Activated B cell treated with CpG ODN at 0.5 μM for 24 hours (primary cell): ENCODE measurements at regions of chr6 and their contacts with region 1.

Region 1: DNA sequence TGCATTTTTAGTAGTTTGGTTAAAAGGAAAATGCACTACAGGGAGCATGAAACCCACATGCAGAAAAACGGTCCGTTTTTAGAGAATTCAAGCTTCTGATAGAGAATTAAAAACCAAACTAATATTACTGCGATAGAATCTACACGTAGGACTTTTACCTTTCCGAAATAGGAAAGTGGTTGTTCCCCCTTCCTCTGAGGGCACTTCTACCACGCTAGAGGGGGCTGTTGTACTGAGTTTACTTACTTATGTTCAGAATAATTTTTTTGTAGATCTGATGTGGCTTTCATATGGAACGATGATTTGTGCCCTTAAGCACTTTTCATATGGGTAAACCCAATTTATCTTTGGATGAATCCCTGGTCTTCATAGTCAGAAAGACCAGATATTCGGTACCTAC is 264.3 kb upstream of the PLN start:
- DNase-seq: no peak
- ATAC-seq: no peak
- H3K4me3 Mint-ChIP-seq: no peak overlapping the region
- H3K27ac Mint-ChIP-seq: no peak overlapping the region
- H3K4me1 Mint-ChIP-seq: no peaks in the 10 kb centered on the region
- H3K27me3 Mint-ChIP-seq: peaks cover 17% of the 10 kb centered on the region
- CTCF ChIP-seq: no peak

Region 2: DNA sequence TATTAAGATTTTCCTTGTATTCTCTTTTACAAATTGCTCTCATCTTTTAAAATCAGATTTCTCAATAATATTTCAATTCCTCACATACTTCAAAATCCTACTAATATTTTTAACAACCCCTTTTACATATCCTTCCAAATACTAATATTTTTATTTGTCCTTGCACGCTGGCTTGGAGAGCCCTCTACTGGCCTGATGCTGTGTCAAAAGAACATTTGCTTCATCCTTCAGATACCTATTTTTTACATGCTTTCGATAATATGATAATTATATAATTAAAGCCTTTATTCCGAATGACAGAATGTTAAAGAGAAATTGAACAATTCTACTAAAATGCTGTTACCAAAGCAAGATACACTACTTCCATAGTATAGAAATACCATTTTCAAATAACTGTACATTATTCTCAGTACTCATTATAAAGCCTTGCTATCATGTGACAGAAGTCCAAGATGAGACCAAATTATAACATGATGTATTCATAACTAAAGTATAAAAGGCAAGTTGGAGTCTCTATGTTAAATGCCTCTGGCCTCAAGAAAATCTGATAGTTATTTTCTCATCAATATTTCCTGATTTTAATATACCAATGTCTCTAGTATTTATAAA is 225.3 kb after region 1 on chr6:
- CTCF ChIA-PET with region 1: no interaction called
- POLR2A ChIA-PET with region 1: no interaction called
- intact Hi-C with region 1: loop called (anchors 5 kb)
- DNase-seq: no peak
- ATAC-seq: no peak
- H3K4me3 Mint-ChIP-seq: no peak overlapping the region
- H3K27ac Mint-ChIP-seq: no peak overlapping the region
- H3K4me1 Mint-ChIP-seq: no peaks in the 10 kb centered on the region
- H3K27me3 Mint-ChIP-seq: no peaks in the 10 kb centered on the region
- CTCF ChIP-seq: no peak

Region 3: GRCh38 chr6:118551063-118552053 is 267.6 kb after region 1 on chr6:
- CTCF ChIA-PET with region 1: no interaction called
- POLR2A ChIA-PET with region 1: no interaction called
- intact Hi-C with region 1: loop called (anchors 1 kb)
- DNase-seq: no peak
- ATAC-seq: peak; percentile 57
- H3K4me3 Mint-ChIP-seq: no peak overlapping the region
- H3K27ac Mint-ChIP-seq: no peak overlapping the region
- H3K4me1 Mint-ChIP-seq: no peaks in the 10 kb centered on the region
- H3K27me3 Mint-ChIP-seq: no peaks in the 10 kb centered on the region
- CTCF ChIP-seq: no peak

Region 4: DNA sequence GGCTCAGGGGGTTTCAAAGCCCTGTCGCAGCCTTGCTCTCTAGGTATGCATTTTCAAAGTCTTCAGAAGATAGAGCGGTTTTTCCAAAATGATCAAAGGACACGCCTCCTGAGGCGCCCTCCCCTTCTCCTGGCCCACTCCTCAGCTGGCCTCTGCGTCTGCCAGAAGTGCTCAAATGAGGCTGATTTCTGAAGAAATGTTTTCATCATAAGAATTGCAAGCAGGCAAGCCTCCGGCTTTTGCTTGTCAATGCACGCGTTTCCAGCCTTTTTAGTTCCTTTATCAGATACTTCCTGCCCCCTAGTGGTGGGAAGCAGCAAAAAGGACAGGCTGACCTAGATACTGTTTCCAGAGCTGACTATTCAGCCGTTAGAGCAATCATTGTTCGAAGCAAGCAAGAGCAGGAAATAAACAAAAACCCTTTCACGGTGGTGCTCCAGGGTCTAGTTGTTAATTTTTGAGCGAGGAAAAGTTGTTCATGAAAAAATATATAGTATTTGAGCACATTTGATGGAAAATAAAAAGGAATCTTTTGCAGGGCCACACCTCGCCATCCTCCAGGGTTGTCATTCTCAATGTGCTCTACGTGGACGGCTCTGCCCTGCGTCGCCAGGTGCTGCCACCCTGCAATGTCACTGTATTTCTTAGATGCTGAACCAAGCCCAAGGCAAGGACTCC is 516.8 kb after region 1 on chr6:
- CTCF ChIA-PET with region 1: no interaction called
- POLR2A ChIA-PET with region 1: no interaction called
- intact Hi-C with region 1: loop called (anchors 10 kb)
- DNase-seq: peak; percentile 34
- ATAC-seq: peak; percentile 91
- H3K4me3 Mint-ChIP-seq: peak overlapping the region; percentile 52
- H3K27ac Mint-ChIP-seq: no peak overlapping the region
- H3K4me1 Mint-ChIP-seq: peaks cover 25% of the 10 kb centered on the region
- H3K27me3 Mint-ChIP-seq: no peaks in the 10 kb centered on the region
- CTCF ChIP-seq: peak; percentile 25

Region 5: GRCh38 chr6:119110601-119111548 is 827.1 kb after region 1 on chr6:
- CTCF ChIA-PET with region 1: no interaction called
- POLR2A ChIA-PET with region 1: no interaction called
- intact Hi-C with region 1: loop called (anchors 1 kb)
- DNase-seq: no peak
- ATAC-seq: peak; percentile 42
- H3K4me3 Mint-ChIP-seq: no peak overlapping the region
- H3K27ac Mint-ChIP-seq: no peak overlapping the region
- H3K4me1 Mint-ChIP-seq: no peaks in the 10 kb centered on the region
- H3K27me3 Mint-ChIP-seq: peaks cover 3% of the 10 kb centered on the region
- CTCF ChIP-seq: no peak